CD14-positive monocyte (primary cell): ENCODE measurements at regions of chr2 and their contacts with region 1.

Region 1: DNA sequence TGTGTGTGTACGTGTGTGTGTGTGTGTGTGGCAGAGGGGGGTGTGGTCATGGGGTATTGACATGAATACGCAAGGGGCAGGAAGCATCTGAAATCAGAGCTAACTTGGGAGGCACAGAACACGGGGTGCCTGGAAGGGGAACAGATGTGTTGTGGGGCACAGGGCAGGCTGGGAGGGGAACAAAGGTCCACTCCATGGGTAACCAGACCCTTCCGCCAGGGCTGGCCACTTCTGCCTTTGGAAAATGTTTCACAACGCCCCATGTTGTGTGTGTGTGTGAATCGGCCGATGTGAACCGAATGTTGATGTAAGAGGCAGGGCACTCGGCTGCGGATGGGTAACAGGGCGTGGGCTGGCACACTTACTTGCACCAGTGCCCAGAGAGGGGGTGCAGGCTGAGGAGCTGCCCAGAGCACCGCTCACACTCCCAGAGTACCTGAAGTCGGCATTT is at the start of gene SLC11A1:
- DNase-seq: peak; percentile 95 to 99 (median 97)
- H3K4me3 ChIP-seq: peak within 1 kb of the TSS; percentile 68 to 100 (median 90)
- H3K4me3 Mint-ChIP-seq: peak within 1 kb of the TSS; percentile 100
- H3K27ac ChIP-seq: peak within 1 kb of the TSS; percentile 90 to 99
- H3K27ac Mint-ChIP-seq: peak within 1 kb of the TSS; percentile 98 to 100 (median 99)
- H3K4me1 ChIP-seq: peaks cover 77 to 82% of the 10 kb centered on the region in 2 donors
- H3K4me1 Mint-ChIP-seq: peaks cover 59% of the 10 kb centered on the region
- H3K27me3 ChIP-seq: no peaks in the 10 kb centered on the region
- H3K27me3 Mint-ChIP-seq: peaks cover 0 to 2% (median 0%) of the 10 kb centered on the region in 3 donors
- CTCF ChIP-seq: no peak
- polyA plus RNA-seq, gene SLC11A1: 184 to 2,019 (median 352) TPM

Region 2: GRCh38 chr2:218292048-218293014 is 89.6 kb before region 1 on chr2 and contains the start of gene TMBIM1:
- intact Hi-C with region 1: loop called in 1 of 2 experiments (anchors 5 kb)
- DNase-seq: peak; percentile 71 to 84 (median 83)
- H3K4me3 ChIP-seq: peak within 1 kb of the TSS; percentile 70 to 90 (median 83)
- H3K4me3 Mint-ChIP-seq: peak within 1 kb of the TSS; percentile 92 to 97
- H3K27ac ChIP-seq: peak within 1 kb of the TSS; percentile 94 to 96
- H3K27ac Mint-ChIP-seq: peak within 1 kb of the TSS; percentile 96 to 99 (median 98)
- H3K4me1 ChIP-seq: peaks cover 65 to 74% of the 10 kb centered on the region in 2 donors
- H3K4me1 Mint-ChIP-seq: peaks cover 64% of the 10 kb centered on the region
- H3K27me3 ChIP-seq: no peaks in the 10 kb centered on the region
- H3K27me3 Mint-ChIP-seq: peaks cover 0 to 2% (median 0%) of the 10 kb centered on the region in 3 donors
- CTCF ChIP-seq: peak; percentile 98
- polyA plus RNA-seq, gene TMBIM1: 101 to 139 (median 129) TPM

Region 3: GRCh38 chr2:218367415-218368153 is 14.4 kb before region 1 on chr2:
- intact Hi-C with region 1: loop called in 1 of 2 experiments (anchors 2 kb)
- DNase-seq: peak; percentile 94 to 98 (median 97)
- H3K4me3 ChIP-seq: peak overlapping the region; percentile 44 to 71 (median 60)
- H3K4me3 Mint-ChIP-seq: peak overlapping the region; percentile 89 to 93
- H3K27ac ChIP-seq: peak overlapping the region; percentile 94 to 99
- H3K27ac Mint-ChIP-seq: peak overlapping the region; percentile 100
- H3K4me1 ChIP-seq: peaks cover 95 to 97% of the 10 kb centered on the region in 2 donors
- H3K4me1 Mint-ChIP-seq: peaks cover 86% of the 10 kb centered on the region
- H3K27me3 ChIP-seq: no peaks in the 10 kb centered on the region
- H3K27me3 Mint-ChIP-seq: peaks cover 0 to 1% (median 0%) of the 10 kb centered on the region in 3 donors
- CTCF ChIP-seq: no peak